Naive thymus-derived CD8-positive, alpha-beta T cell (primary cell): ENCODE measurements at regions of chr2 and their contacts with region 1.

Region 1: GRCh38 chr2:30336978-30337841 is 105.9 kb downstream of the LBH start:
- DNase-seq: peak in 8 of 10 donors; percentile 27 to 73 (median 60)
- ATAC-seq: peak; percentile 83 to 85
- H3K4me3 Mint-ChIP-seq: peak overlapping the region; percentile 76 to 92 (median 84)
- H3K27ac Mint-ChIP-seq: peak overlapping the region; percentile 94 to 100 (median 98)
- H3K4me1 Mint-ChIP-seq: peaks cover 63 to 92% (median 85%) of the 10 kb centered on the region in 4 donors
- H3K27me3 Mint-ChIP-seq: no peaks in the 10 kb centered on the region

Region 2: GRCh38 chr2:29097569-29097968 is 1239.6 kb before region 1 on chr2:
- POLR2A ChIA-PET with region 1: no interaction called
- DNase-seq: no peak
- ATAC-seq: no peak
- H3K4me3 Mint-ChIP-seq: no peak overlapping the region
- H3K27ac Mint-ChIP-seq: no peak overlapping the region
- H3K4me1 Mint-ChIP-seq: peaks cover 0 to 6% (median 3%) of the 10 kb centered on the region in 4 donors
- H3K27me3 Mint-ChIP-seq: peaks cover 0 to 5% (median 1%) of the 10 kb centered on the region in 5 donors

Region 3: DNA sequence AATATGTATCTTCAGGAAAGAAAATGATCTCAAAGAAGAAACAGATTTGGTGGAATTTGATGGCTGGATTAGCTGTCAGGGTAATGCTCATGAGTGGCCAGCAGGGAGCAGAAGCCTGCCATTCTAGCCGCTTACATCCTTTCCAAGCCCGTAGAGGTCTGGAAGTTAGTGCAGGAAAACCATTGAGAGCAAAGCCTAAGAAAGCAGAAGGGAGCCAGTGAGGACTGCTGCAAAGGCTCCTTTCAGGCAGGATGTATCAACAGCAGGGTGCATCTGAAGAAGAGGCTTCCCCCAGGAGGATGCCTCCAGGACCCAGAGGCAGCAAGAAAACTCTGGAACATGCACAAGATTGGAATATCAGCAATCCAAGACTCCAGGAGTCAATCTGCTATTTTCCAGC is 128.8 kb before region 1 on chr2:
- POLR2A ChIA-PET with region 1: interaction called, 15 read pairs
- DNase-seq: peak in 8 of 10 donors; percentile 11 to 64 (median 36)
- ATAC-seq: peak; percentile 21 to 69
- H3K4me3 Mint-ChIP-seq: peak overlapping the region; percentile 19 to 79 (median 58)
- H3K27ac Mint-ChIP-seq: peak overlapping the region in 9 of 10 donors; percentile 81 to 95 (median 93)
- H3K4me1 Mint-ChIP-seq: peaks cover 16 to 30% (median 25%) of the 10 kb centered on the region in 4 donors
- H3K27me3 Mint-ChIP-seq: no peaks in the 10 kb centered on the region

Region 4: GRCh38 chr2:30252723-30253701 is 84.2 kb before region 1 on chr2:
- POLR2A ChIA-PET with region 1: interaction called, 56 read pairs
- DNase-seq: peak in 5 of 10 donors; percentile 18 to 66 (median 45)
- ATAC-seq: peak; percentile 22 to 41
- H3K4me3 Mint-ChIP-seq: peak overlapping the region; percentile 56 to 87 (median 78)
- H3K27ac Mint-ChIP-seq: peak overlapping the region; percentile 91 to 98 (median 96)
- H3K4me1 Mint-ChIP-seq: peaks cover 58 to 97% (median 96%) of the 10 kb centered on the region in 4 donors
- H3K27me3 Mint-ChIP-seq: no peaks in the 10 kb centered on the region

Region 5: DNA sequence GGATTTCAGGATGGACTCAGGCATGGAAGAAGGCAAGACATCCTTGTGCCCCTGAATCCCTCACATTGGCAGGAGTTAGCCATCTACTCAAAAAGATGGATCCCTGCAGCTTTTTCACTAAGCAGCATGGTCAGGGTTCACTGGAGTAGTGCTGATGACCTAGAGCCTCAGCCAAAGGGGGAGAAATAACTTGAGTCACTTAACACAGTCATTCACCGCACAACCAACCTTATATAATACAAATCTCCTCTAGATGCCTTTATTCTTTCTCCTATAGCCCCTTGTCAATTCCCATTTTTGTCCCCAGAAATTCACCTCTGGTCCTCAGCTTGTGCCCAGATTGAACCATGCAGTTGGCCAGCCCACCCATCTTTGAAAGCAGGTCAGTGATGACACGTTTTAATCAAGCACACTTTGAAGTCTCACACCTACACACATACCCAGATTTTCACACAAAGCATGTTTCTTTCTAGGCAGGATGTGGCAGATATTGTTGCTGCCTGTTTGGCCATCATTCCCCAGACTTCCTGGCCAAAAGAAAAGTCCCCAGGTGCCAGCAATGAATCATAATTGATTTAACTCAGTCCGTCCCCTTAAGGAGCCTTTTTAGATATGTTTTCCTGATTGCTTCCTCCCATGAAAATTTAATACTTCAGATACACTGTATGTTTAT is 21.7 kb before region 1 on chr2:
- POLR2A ChIA-PET with region 1: interaction called, 16 read pairs
- DNase-seq: peak in 6 of 10 donors; percentile 18 to 58 (median 44)
- ATAC-seq: peak; percentile 82 to 91
- H3K4me3 Mint-ChIP-seq: peak overlapping the region in 9 of 10 donors; percentile 34 to 81 (median 77)
- H3K27ac Mint-ChIP-seq: peak overlapping the region; percentile 47 to 99 (median 96)
- H3K4me1 Mint-ChIP-seq: peaks cover 26 to 67% (median 58%) of the 10 kb centered on the region in 4 donors
- H3K27me3 Mint-ChIP-seq: no peaks in the 10 kb centered on the region

Region 6: GRCh38 chr2:30366199-30366691 is 29.0 kb after region 1 on chr2:
- POLR2A ChIA-PET with region 1: interaction called, 32 read pairs
- DNase-seq: peak in 8 of 10 donors; percentile 17 to 52 (median 34)
- ATAC-seq: peak; percentile 64 to 78
- H3K4me3 Mint-ChIP-seq: peak overlapping the region in 9 of 10 donors; percentile 8 to 68 (median 50)
- H3K27ac Mint-ChIP-seq: peak overlapping the region; percentile 58 to 94 (median 81)
- H3K4me1 Mint-ChIP-seq: peaks cover 36 to 61% (median 47%) of the 10 kb centered on the region in 4 donors
- H3K27me3 Mint-ChIP-seq: no peaks in the 10 kb centered on the region

Region 7: GRCh38 chr2:30472326-30472725 is 135.1 kb after region 1 on chr2:
- POLR2A ChIA-PET with region 1: interaction called, 10 read pairs
- DNase-seq: no peak
- ATAC-seq: no peak
- H3K4me3 Mint-ChIP-seq: peak overlapping the region in 1 of 10 donors; percentile 3
- H3K27ac Mint-ChIP-seq: peak overlapping the region in 2 of 10 donors; percentile 15 to 34
- H3K4me1 Mint-ChIP-seq: peaks cover 12 to 63% (median 54%) of the 10 kb centered on the region in 4 donors
- H3K27me3 Mint-ChIP-seq: no peaks in the 10 kb centered on the region